Activated B cell treated with CpG ODN at 0.5 μM for 24 hours (primary cell): ENCODE measurements at regions of chr2 and their contacts with region 1.

Region 1: DNA sequence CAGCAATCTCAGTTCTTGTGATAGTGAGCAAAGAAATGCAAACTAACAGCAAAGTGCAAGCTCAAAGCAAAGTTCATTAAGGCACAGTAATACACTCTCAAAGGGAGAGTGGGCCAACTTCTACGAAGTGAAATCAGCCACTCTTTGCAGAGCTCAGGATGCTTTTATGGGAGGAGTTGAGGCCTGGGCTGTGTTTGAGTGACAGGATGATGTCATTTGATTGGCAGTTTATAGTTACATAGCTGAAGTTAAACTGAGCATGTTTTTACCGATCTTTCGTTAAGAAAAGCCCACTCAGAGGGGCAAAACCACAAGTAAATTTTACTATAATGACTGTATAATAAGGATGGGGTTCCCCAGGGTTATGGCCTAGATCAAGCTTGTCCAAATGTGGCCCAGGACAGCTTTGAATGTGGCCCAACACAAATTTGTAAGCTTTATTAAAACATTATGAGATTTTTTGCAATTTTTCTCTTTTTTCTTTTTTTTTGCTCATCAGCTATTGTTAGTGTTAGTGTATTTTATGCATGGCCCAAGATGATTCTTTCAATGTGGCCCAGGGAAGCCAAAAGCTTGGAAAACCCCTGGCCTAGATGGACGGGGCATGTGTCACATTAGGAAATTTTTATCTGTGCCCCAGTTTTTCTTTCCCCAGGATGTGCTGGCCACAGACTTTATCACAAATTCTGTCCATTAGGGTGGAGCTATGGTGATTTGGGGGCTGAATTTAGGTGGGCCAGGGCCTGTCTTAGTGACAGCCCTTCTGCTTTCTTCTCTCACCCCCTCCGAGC is 8.3 kb upstream of the DNAH7 start:
- DNase-seq: no peak
- ATAC-seq: no peak
- H3K4me3 Mint-ChIP-seq: no peak overlapping the region
- H3K27ac Mint-ChIP-seq: peak overlapping the region; percentile 1
- H3K4me1 Mint-ChIP-seq: peaks cover 38% of the 10 kb centered on the region
- H3K27me3 Mint-ChIP-seq: no peaks in the 10 kb centered on the region
- CTCF ChIP-seq: no peak

Region 2: DNA sequence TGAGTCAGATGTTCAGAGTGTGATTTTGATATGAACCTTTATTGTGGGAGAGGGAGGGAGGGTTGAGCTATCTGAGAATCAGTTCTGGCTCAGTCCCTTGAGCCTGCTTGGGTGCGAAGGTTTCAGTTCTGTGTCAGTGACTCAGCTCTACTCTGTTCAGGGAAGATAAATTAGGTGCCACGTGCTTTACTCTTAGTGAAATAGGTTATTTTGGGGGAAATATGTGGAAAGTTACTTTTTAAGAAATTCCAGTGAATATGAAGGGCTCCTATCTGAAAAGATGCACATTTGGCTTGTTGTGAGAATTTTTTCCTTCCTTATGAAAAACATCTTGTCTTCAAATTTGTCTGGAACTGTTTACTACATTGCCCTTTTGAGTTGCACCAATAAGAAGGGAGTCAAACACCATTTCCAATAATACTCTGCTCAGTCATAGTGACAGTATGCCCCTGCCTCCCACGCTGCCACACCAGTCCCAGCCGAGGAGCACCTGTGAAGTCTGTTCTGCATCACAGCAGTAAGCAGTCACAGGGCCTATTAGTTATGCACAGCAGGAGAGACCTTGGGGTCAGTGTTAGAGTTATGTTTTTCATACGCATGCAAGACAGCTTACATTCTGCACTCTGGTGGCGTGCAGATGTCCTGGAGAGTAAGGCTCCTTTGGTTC is 24.5 kb after region 1 on chr2:
- CTCF ChIA-PET with region 1: interaction called, 18 read pairs
- POLR2A ChIA-PET with region 1: interaction called, 3 read pairs
- intact Hi-C with region 1: loop called (anchors 1 kb)
- DNase-seq: peak; percentile 34
- ATAC-seq: peak; percentile 87
- H3K4me3 Mint-ChIP-seq: peak overlapping the region; percentile 40
- H3K27ac Mint-ChIP-seq: peak overlapping the region; percentile 81
- H3K4me1 Mint-ChIP-seq: peaks cover 77% of the 10 kb centered on the region
- H3K27me3 Mint-ChIP-seq: no peaks in the 10 kb centered on the region
- CTCF ChIP-seq: no peak

Region 3: GRCh38 chr2:196137271-196137670 is 60.3 kb after region 1 on chr2:
- CTCF ChIA-PET with region 1: interaction called, 9 read pairs
- POLR2A ChIA-PET with region 1: interaction called, 11 read pairs
- intact Hi-C with region 1: no loop called
- DNase-seq: no peak
- ATAC-seq: no peak
- H3K4me3 Mint-ChIP-seq: no peak overlapping the region
- H3K27ac Mint-ChIP-seq: peak overlapping the region; percentile 36
- H3K4me1 Mint-ChIP-seq: peaks cover 10% of the 10 kb centered on the region
- H3K27me3 Mint-ChIP-seq: no peaks in the 10 kb centered on the region
- CTCF ChIP-seq: no peak

Region 4: DNA sequence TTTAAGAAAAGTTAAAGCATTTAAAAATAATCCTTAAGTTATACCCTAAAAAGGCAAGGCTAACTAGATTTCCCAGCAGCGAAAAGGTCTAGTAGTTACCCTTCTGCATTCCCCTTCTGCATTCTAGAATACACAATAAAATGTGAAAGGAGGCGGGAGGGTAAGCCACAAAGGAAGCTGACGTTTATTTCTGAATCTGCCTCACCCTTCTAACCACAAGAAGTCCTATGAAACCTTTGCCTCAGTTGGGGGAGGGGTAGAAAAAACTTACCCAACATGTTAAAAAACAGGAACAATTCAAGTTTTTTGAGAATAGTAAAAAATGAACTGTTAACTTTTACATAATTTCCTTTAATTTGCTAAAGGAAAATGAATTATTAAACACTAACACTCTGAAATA is 83.1 kb after region 1 on chr2:
- CTCF ChIA-PET with region 1: interaction called, 10 read pairs
- POLR2A ChIA-PET with region 1: interaction called, 6 read pairs
- intact Hi-C with region 1: no loop called
- DNase-seq: no peak
- ATAC-seq: peak; percentile 75
- H3K4me3 Mint-ChIP-seq: peak overlapping the region; percentile 57
- H3K27ac Mint-ChIP-seq: peak overlapping the region; percentile 84
- H3K4me1 Mint-ChIP-seq: peaks cover 86% of the 10 kb centered on the region
- H3K27me3 Mint-ChIP-seq: no peaks in the 10 kb centered on the region
- CTCF ChIP-seq: no peak

Region 5: GRCh38 chr2:196225213-196225612 is 148.2 kb after region 1 on chr2:
- CTCF ChIA-PET with region 1: interaction called, 11 read pairs
- POLR2A ChIA-PET with region 1: no interaction called
- intact Hi-C with region 1: no loop called
- DNase-seq: no peak
- ATAC-seq: no peak
- H3K4me3 Mint-ChIP-seq: no peak overlapping the region
- H3K27ac Mint-ChIP-seq: peak overlapping the region; percentile 8
- H3K4me1 Mint-ChIP-seq: peaks cover 61% of the 10 kb centered on the region
- H3K27me3 Mint-ChIP-seq: no peaks in the 10 kb centered on the region
- CTCF ChIP-seq: no peak

Region 6: DNA sequence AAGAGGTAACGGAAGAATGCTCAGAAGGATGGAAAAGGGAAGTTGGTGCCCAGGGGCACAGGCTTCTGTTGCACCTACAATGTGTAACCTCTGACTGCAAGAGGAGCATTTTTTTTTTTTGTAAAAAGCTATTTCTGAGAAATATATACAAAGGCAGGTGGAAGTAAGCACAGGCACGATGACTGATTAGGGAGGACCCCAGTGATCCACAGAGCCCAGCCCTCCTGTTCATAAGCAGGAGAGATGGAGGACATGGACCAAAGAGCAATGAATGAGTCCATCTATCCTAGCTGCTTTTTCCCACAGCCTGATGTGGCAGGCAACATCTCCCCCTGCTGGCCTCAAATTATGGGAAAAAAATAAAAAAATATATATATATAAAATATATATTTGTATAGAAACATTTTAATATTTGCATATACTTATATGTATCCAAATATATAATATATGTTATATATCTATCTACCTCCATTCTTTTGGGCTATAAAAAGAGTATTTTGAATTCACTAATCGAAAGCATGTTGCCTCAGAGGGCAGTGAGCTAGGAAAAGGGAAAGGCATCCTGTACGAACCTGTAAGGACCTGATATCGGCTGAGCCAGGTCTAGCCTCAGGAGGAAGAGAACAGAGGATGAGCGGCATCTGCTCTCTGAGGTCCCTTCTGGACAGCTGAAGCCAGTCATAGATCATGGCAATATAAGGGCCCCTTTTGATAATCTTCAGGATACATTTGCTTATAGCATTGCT is 260.4 kb after region 1 on chr2:
- CTCF ChIA-PET with region 1: interaction called, 111 read pairs
- POLR2A ChIA-PET with region 1: interaction called, 6 read pairs
- intact Hi-C with region 1: loop called (anchors 1 kb)
- DNase-seq: no peak
- ATAC-seq: peak; percentile 53
- H3K4me3 Mint-ChIP-seq: no peak overlapping the region
- H3K27ac Mint-ChIP-seq: peak overlapping the region; percentile 5
- H3K4me1 Mint-ChIP-seq: peaks cover 20% of the 10 kb centered on the region
- H3K27me3 Mint-ChIP-seq: no peaks in the 10 kb centered on the region
- CTCF ChIP-seq: no peak

Region 7: DNA sequence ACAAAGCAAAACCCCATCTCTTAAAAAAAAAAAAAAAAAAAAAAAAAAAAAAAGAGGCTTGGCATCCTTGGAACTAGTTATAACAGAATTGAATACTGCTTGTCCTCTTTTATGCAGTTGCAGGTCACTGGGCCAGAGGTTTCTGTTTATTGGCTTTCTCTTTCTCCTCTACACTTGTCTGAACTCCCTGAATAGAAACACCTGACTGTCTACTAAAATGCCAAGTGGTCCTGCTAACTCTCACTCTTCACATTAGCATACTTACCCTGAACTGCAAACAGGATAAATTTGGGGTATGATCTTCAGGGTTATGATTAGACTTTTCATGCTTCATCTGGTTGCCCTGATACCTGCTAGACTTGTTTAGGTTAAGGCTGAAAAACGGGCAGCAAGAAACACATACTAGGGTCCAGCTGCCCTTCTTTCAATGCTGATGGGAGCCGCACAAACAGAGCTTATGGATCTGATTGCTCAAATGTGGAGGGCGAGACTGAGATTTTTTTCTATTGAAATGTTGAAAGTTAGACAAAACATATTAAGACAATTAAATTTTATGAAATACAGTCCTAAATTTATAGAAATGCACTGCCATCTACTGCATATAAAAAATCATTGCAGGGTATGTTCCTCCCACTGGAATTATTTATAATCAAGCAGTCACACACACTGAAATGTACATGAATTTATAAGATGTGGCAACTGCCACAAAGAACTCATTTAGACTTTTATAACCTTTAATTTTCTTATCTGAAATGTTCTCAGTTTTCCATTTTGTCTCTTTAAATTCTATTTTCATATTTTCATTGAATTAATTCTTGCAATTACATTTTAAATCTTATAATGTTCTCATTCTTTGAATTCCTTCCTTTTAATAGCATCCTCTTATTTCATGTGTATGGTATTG is 681.8 kb after region 1 on chr2:
- CTCF ChIA-PET with region 1: no interaction called
- POLR2A ChIA-PET with region 1: no interaction called
- intact Hi-C with region 1: loop called (anchors 5 kb)
- DNase-seq: no peak
- ATAC-seq: no peak
- H3K4me3 Mint-ChIP-seq: no peak overlapping the region
- H3K27ac Mint-ChIP-seq: no peak overlapping the region
- H3K4me1 Mint-ChIP-seq: no peaks in the 10 kb centered on the region
- H3K27me3 Mint-ChIP-seq: no peaks in the 10 kb centered on the region
- CTCF ChIP-seq: no peak